Dorsolateral prefrontal cortex (tissue), 120 donors: ENCODE measurements at regions of chr1 and their contacts with region 1.

Region 1: GRCh38 chr1:227542143-227543120 is 20.9 kb upstream of the ZNF678 start:
- DNase-seq: peak; percentile 59 to 90 (median 77)
- H3K4me3 ChIP-seq: peak overlapping the region; percentile 54 to 88 (median 77)
- H3K27ac ChIP-seq: peak overlapping the region in 39 of 59 donors; percentile 2 to 84 (median 52)
- H3K27me3 ChIP-seq: no peaks in the 10 kb centered on the region
- CTCF ChIP-seq: peak; percentile 78 to 100 (median 96)

Region 2: DNA sequence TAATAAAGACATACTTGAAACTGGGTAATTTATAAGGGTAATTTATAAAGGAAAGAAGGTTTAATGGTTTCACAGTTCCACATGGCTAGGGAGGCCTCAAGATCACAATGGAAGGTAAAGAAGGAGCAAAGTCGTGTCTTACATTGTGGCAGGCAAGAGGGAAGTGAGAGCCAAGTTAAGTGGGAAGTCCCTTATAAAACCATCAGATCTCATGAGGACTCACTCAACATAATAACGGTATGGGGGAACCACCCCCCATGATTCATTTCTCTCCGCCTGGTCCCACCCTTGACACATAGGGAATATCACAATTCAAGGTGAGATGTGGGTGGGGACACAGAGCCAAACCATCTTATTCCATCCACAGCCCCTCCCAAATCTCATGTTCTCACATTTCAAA is 55.9 kb before region 1 on chr1:
- intact Hi-C with region 1: loop called in 1 of 2 experiments (anchors 2 kb)
- DNase-seq: no peak
- H3K4me3 ChIP-seq: no peak overlapping the region
- H3K27ac ChIP-seq: no peak overlapping the region
- H3K27me3 ChIP-seq: peaks cover 0 to 6% (median 0%) of the 10 kb centered on the region in 45 donors
- CTCF ChIP-seq: no peak

Region 3: DNA sequence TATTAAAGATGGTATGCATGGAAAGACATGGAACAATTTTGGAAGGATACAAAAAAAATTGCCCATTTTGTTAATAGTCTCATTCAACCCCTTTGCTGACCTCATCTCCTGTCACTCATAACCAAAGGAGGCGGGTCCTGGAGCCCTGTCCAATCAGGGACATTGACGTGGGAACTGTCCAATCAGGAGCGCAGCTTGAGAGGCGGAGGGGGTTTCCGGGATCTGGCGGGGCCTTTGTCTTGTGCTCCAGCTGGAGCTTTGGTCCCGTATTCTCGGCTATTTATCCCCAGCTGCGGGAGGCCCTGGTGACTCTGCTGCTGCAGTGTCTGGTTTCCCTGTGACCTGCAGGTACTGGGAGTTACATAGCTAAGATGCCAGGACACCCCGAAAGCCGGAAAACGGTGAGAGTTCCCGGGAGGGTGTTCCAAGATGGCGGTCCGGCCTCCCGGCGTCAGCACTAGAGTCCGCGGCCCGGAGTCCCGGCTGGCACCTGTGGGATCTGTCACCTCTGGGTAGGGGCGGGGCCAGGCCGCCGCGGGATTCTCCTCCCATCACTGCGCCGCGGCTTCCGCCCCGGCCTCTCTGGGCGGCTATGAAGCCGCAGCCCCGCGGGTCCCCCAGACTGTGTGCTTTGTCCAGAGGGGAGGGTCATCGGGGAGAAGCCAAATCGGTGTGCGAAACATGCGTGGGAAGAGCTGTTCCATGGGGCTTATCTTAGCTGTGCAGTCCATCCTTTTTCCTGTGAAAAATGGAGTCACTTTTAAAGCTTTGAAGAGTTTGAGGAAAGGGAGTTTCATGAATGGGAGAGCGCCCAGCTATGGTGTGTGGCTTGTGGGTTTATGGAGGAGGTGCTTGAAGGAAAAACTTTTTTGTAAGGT is 21.1 kb after region 1 on chr1 and contains the start of gene ZNF678:
- intact Hi-C with region 1: loop called in 1 of 2 experiments (anchors 2 kb)
- DNase-seq: peak; percentile 86 to 95 (median 94)
- H3K4me3 ChIP-seq: peak within 1 kb of the TSS; percentile 57 to 99 (median 85)
- H3K27ac ChIP-seq: peak within 1 kb of the TSS in 50 of 59 donors; percentile 13 to 86 (median 68)
- H3K27me3 ChIP-seq: peaks cover 0 to 33% (median 19%) of the 10 kb centered on the region in 45 donors
- CTCF ChIP-seq: peak in 10 of 56 donors; percentile 8 to 27 (median 13)
- total RNA-seq, gene ZNF678: 6.6 to 16.3 (median 10.9) TPM